A673 (cell line): ENCODE measurements at regions of chr2 and their contacts with region 1.

Region 1: GRCh38 chr2:122191341-122191740 is 435.9 kb downstream of the TSN start:
- DNase-seq: peak; percentile 91
- H3K4me3 ChIP-seq: no peak overlapping the region
- H3K27ac ChIP-seq: peak overlapping the region; percentile 12
- H3K4me1 ChIP-seq: peaks cover 44% of the 10 kb centered on the region
- H3K27me3 ChIP-seq: no peaks in the 10 kb centered on the region
- CTCF ChIP-seq: peak; percentile 90

Region 2: GRCh38 chr2:121897335-121897970 is 293.9 kb before region 1 on chr2:
- CTCF ChIA-PET with region 1: interaction called, 18 read pairs
- POLR2A ChIA-PET with region 1: no interaction called
- intact Hi-C with region 1: no loop called
- DNase-seq: peak; percentile 90
- H3K4me3 ChIP-seq: no peak overlapping the region
- H3K27ac ChIP-seq: no peak overlapping the region
- H3K4me1 ChIP-seq: peaks cover 6% of the 10 kb centered on the region
- H3K27me3 ChIP-seq: no peaks in the 10 kb centered on the region
- CTCF ChIP-seq: peak; percentile 88

Region 3: GRCh38 chr2:121910139-121910538 is 281.2 kb before region 1 on chr2:
- CTCF ChIA-PET with region 1: no interaction called
- POLR2A ChIA-PET with region 1: no interaction called
- intact Hi-C with region 1: no loop called
- DNase-seq: no peak
- H3K4me3 ChIP-seq: no peak overlapping the region
- H3K27ac ChIP-seq: no peak overlapping the region
- H3K4me1 ChIP-seq: peaks cover 27% of the 10 kb centered on the region
- H3K27me3 ChIP-seq: no peaks in the 10 kb centered on the region
- CTCF ChIP-seq: no peak

Region 4: GRCh38 chr2:122329278-122329677 is 137.9 kb after region 1 on chr2:
- CTCF ChIA-PET with region 1: no interaction called
- POLR2A ChIA-PET with region 1: no interaction called
- intact Hi-C with region 1: loop called (anchors 5 kb)
- DNase-seq: peak; percentile 59
- H3K4me3 ChIP-seq: no peak overlapping the region
- H3K27ac ChIP-seq: no peak overlapping the region
- H3K4me1 ChIP-seq: peaks cover 16% of the 10 kb centered on the region
- H3K27me3 ChIP-seq: no peaks in the 10 kb centered on the region
- CTCF ChIP-seq: no peak

Region 5: GRCh38 chr2:122368576-122369243 is 177.4 kb after region 1 on chr2:
- CTCF ChIA-PET with region 1: no interaction called
- POLR2A ChIA-PET with region 1: no interaction called
- intact Hi-C with region 1: loop called (anchors 5 kb)
- DNase-seq: peak; percentile 45
- H3K4me3 ChIP-seq: no peak overlapping the region
- H3K27ac ChIP-seq: no peak overlapping the region
- H3K4me1 ChIP-seq: peaks cover 8% of the 10 kb centered on the region
- H3K27me3 ChIP-seq: no peaks in the 10 kb centered on the region
- CTCF ChIP-seq: peak; percentile 52